ENCODE measurements at regions of chr1 and their contacts with region 1.

Region 1: GRCh38 chr1:212414328-212415106 is at the start of gene PACC1:
- DNase-seq: peak; percentile 88
- H3K4me3 Mint-ChIP-seq: peak within 1 kb of the TSS; percentile 100
- H3K27ac Mint-ChIP-seq: peak within 1 kb of the TSS; percentile 97
- H3K4me1 Mint-ChIP-seq: peaks cover 21% of the 10 kb centered on the region
- H3K27me3 Mint-ChIP-seq: peaks cover 6% of the 10 kb centered on the region
- total RNA-seq, gene PACC1: 17.6 and 19.8 TPM in 2 replicates

Region 2: GRCh38 chr1:212432706-212433576 is 18.4 kb after region 1 on chr1 and contains the start of gene NENF:
- intact Hi-C with region 1: loop called (anchors 1 kb)
- DNase-seq: peak; percentile 74
- H3K4me3 Mint-ChIP-seq: peak within 1 kb of the TSS; percentile 77
- H3K27ac Mint-ChIP-seq: peak within 1 kb of the TSS; percentile 53
- H3K4me1 Mint-ChIP-seq: peaks cover 32% of the 10 kb centered on the region
- H3K27me3 Mint-ChIP-seq: peaks cover 6% of the 10 kb centered on the region
- total RNA-seq, gene NENF: 29.7 and 32.5 TPM in 2 replicates

Region 3: GRCh38 chr1:212558693-212559480 is 144.4 kb after region 1 on chr1:
- intact Hi-C with region 1: loop called (anchors 5 kb)
- DNase-seq: peak; percentile 88
- H3K4me3 Mint-ChIP-seq: peak overlapping the region; percentile 61
- H3K27ac Mint-ChIP-seq: peak overlapping the region; percentile 93
- H3K4me1 Mint-ChIP-seq: peaks cover 10% of the 10 kb centered on the region
- H3K27me3 Mint-ChIP-seq: peaks cover 38% of the 10 kb centered on the region

Measured in activated T-helper 1 cell treated with anti-CD3 and anti-CD28 coated beads, Interleukin-12 subunit alpha, Interleukin-12 subunit beta, Interleukin-2, Interleukin-4 antibody, amounts not matched to agents 30 ng/mL and 10 ng/mL and 1 ng/mL, durations not matched to agents 14 hours and 24 hours and 36 hours (primary cell).